ENCODE measurements at regions of chr16 and their contacts with region 1.

Region 1: GRCh38 chr16:73172241-73172972 is 124.5 kb upstream of the ZFHX3 start:
- H3K4me3 Mint-ChIP-seq: no peak overlapping the region
- H3K27ac Mint-ChIP-seq: no peak overlapping the region
- H3K4me1 Mint-ChIP-seq: peaks cover 25% of the 10 kb centered on the region
- H3K27me3 Mint-ChIP-seq: peaks cover 5% of the 10 kb centered on the region

Region 2: GRCh38 chr16:72797621-72798020 is 374.8 kb before region 1 on chr16:
- intact Hi-C with region 1: no loop called
- H3K4me3 Mint-ChIP-seq: no peak overlapping the region
- H3K27ac Mint-ChIP-seq: no peak overlapping the region
- H3K4me1 Mint-ChIP-seq: no peaks in the 10 kb centered on the region
- H3K27me3 Mint-ChIP-seq: no peaks in the 10 kb centered on the region

Region 3: DNA sequence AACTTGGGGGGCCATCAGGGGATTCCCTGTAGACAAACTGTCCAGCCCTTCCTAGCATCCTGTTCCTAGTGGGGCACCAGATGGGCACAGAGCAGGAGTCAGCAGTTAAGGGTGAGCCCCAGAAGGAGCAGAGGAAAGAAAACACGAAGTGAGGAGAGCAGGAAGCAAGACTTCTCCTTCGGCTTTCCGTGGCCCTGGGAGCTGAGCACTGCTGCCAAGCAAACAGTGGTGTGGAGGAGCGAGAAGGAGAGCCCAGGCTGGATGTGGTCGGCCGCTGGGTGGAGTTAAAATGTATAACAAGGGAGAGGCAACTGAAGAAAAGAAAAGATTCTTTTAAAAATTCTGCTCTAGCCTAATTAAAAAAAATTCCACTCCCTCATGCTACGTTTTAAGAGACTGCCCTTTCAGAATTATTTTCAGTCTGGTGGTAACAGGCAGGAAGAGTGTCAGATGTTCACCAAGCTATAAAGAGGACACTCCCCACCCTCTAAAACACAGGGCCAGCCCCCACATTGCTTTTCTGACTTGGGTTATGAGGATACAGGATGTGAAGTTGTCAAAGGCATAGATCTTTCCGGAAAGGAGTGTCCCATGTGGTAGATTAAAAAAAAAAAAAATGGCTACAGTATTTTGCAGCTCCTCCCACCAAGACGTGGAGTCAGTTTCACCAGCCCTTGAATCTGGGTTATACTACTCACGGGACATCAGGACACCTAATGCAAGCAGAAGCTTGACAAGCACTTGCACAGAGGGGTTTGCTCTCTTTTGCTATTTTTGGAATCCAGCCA is 49.6 kb before region 1 on chr16:
- intact Hi-C with region 1: loop called (anchors 10 kb)
- H3K4me3 Mint-ChIP-seq: peak overlapping the region; percentile 10
- H3K27ac Mint-ChIP-seq: peak overlapping the region; percentile 93
- H3K4me1 Mint-ChIP-seq: peaks cover 63% of the 10 kb centered on the region
- H3K27me3 Mint-ChIP-seq: no peaks in the 10 kb centered on the region

Measured in dendritic cell treated with granulocyte-macrophage colony-stimulating factor and Interleukin-4, amounts not matched to agents 40 ng/mL and 50 ng/mL, for 4 days (primary cell).